Left ventricle myocardium superior (tissue), 1 donor: ENCODE measurements at regions of chr6 and their contacts with region 1.

Region 1: GRCh38 chr6:34459899-34460593 is 5.8 kb upstream of the PACSIN1 start:
- DNase-seq: no peak
- ATAC-seq: peak; percentile 58

Region 2: DNA sequence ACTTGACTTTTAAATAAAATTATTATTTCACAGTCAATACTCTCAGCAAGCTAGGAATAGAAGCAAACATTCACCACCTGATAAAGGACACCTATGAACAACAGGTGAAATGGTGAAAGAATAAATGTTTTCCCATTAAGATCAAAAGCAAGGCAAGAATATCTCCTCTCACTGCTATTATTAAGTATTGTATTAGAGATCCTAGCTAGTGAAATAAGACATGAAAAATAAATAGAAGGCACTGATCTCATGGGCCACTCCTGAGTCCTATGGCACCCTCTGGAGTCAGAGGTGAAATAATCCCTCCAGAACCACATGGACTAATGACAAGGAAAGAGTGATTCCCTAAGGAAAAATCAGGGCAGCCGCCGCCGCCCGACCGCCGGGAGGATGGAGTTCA is 63.5 kb before region 1 on chr6:
- intact Hi-C with region 1: no loop called
- DNase-seq: no peak
- ATAC-seq: no peak

Region 3: GRCh38 chr6:34425498-34426410 is 34.3 kb before region 1 on chr6 and contains the start of gene RPS10:
- intact Hi-C with region 1: no loop called
- DNase-seq: peak; percentile 98
- ATAC-seq: peak; percentile 99
- total RNA-seq, gene RPS10: 604 TPM

Region 4: DNA sequence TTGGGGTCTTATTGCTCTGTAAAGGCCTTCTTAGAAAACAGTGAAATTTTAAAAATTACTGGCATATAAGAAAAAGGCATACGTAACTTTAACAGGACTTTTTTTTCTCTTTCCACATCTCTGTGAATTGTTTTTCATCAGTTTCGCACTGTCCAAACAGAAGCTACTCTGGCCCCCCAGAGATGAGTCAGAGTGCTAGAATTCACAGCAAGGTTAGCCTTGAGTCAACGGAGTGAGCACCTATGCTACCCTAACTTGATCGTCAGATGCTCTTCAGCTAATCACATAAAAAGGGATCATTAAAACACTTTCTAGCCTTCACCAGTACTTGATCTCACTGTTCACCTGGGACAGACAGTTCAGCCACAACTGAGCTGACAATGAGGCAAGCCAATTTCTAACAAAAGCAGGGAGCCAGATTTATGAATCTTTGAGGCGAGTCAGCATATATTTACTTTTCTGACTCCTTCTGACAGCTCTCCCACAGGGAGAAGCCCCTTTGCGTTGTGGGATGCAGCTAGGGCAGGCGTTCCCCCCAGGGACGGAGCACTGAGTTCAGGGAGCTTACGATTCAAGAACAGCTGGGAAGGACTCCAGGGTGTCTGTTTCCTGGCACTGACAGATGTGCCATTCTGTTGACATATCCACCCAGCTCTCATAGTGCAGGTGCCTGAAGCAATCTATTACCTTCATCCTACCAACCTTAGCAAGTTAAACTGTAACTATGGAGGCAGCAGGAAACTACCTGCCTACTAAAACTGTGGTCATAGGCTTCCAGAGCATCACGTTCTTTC is 142.5 kb after region 1 on chr6:
- intact Hi-C with region 1: loop called (anchors 10 kb)
- DNase-seq: no peak
- ATAC-seq: peak; percentile 49